Lower leg skin (tissue), 4 donors: ENCODE measurements at regions of chr5 and their contacts with region 1.

Region 1: DNA sequence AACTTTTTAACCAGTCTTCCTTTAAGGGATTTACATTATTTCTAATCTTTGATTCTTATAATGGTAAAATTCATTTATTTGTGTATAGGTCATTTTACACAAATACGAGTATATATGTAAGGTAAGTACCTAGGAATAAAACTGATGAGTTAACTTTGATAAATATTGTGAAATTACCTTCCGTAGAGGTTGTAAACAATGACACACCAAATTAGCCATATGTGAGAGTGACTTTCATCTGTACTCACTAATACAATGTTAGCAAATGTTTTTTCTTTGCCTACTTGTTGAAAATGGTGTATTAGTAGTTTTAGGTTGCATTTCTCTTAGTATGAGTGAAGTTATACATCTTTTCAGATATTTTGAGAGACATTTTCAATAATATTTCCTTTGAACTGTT is 42.6 kb upstream of the TSLP start:
- DNase-seq: no peak
- H3K4me3 ChIP-seq: no peak overlapping the region
- CTCF ChIP-seq: no peak
- POLR2A ChIP-seq: no peak

Region 2: GRCh38 chr5:110262749-110263148 is 766.1 kb before region 1 on chr5:
- intact Hi-C with region 1: loop called (anchors 5 kb)
- DNase-seq: no peak
- H3K4me3 ChIP-seq: no peak overlapping the region
- CTCF ChIP-seq: no peak
- POLR2A ChIP-seq: no peak

Region 3: DNA sequence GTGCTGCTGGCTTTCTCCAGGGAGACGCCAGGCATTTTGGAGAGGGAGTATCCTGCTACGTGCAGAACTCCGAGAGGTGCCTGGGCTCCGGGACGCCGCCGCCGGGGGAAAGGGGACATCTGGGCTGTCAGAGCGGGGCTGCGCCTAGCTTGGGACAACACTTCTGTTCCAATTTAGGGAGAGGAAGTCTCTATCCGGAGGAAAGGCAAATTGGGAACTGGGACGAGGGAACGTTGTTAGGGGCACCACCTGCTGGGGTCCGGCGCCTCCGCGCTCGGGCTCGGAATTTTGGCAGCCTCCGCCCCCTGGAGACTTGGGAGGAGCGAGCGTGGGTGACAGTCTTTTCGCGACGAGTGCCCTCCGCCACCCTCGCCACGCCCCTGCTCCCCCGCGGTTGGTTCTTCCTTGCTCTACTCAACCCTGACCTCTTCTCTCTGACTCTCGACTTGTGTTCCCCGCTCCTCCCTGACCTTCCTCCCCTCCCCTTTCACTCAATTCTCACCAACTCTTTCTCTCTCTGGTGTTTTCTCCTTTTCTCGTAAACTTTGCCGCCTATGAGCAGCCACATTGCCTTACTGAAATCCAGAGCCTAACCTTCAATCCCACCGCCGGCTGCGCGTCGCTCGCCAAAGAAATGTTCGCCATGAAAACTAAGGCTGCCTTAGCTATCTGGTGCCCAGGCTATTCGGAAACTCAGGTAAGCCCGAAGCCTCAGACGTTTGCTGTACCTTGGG is 44.3 kb after region 1 on chr5:
- intact Hi-C with region 1: no loop called
- DNase-seq: peak; percentile 68 to 92
- H3K4me3 ChIP-seq: peak overlapping the region; percentile 35
- CTCF ChIP-seq: no peak
- POLR2A ChIP-seq: no peak